ENCODE measurements at regions of chr21 and their contacts with region 1.

Region 1: DNA sequence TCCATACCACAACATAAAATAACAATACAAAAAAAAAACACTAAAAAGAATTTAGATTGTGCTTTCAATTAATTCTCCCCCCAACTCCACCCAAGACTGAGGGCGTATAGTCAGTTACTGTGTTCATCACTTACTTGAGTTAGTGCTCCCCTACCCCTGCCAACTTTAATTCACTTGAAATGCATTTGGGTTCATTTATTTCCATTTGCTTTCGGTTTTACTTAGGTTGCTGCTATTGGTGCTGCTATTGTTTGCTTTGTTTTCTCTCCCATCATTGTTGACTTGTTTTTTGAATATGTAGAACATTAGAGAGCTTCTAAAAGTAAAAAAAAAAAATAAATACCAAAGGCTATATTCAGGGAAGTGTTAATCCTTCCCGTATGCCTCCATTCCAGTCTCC is 10.7 kb upstream of the CYYR1 start:
- DNase-seq: no peak
- H3K4me3 ChIP-seq: no peak overlapping the region
- H3K27ac ChIP-seq: no peak overlapping the region
- H3K4me1 ChIP-seq: no peaks in the 10 kb centered on the region
- H3K27me3 ChIP-seq: no peaks in the 10 kb centered on the region
- CTCF ChIP-seq: no peak
- EP300 ChIP-seq: no peak
- POLR2A ChIP-seq: no peak

Region 2: DNA sequence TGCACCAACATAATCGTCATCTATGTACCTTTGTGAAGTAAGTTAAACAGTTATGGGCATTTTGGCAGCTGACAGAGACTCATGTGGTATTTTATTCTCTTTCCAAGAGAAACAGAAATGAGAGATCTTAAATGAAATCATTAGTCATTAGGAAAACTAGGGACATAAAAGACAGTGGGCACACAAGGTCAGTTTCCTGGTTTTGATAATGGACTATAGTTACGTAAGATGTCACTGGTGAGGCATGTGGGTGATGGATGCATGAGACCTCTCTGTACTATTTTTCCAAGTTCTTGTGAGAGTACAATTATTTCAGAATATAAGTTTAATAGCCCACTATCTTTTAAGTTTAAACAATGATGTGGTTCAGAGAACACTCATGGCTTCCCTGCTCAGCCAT is 630.1 kb before region 1 on chr21:
- in situ Hi-C with region 1: no loop called
- intact Hi-C with region 1: no loop called
- DNase-seq: no peak
- H3K4me3 ChIP-seq: no peak overlapping the region
- H3K27ac ChIP-seq: no peak overlapping the region
- H3K4me1 ChIP-seq: peaks cover 0 to 15% (median 10%) of the 10 kb centered on the region in 4 donors
- H3K27me3 ChIP-seq: no peaks in the 10 kb centered on the region
- CTCF ChIP-seq: no peak
- EP300 ChIP-seq: no peak
- POLR2A ChIP-seq: no peak

Region 3: DNA sequence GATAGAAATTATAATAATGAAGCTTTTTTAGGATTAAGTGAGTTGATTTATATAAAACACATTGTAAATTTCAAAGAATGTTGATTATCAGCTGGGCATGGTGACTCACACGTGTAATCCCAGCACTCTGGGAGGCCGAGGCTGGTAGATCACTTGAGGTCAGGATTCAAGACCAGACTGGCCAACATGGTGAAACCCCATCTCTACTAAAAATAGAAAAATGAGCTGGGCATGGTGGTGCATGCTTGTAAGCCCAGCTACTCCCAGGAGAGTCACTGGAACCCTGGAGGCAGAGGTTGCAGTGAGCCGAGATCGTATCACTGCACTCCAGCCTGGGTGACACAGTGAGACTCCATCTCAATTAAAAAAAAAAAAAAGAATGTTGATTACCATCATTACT is 243.0 kb after region 1 on chr21:
- in situ Hi-C with region 1: no loop called
- intact Hi-C with region 1: loop called (anchors 5 kb)
- DNase-seq: no peak
- H3K4me3 ChIP-seq: no peak overlapping the region
- H3K27ac ChIP-seq: no peak overlapping the region
- H3K4me1 ChIP-seq: no peaks in the 10 kb centered on the region
- H3K27me3 ChIP-seq: no peaks in the 10 kb centered on the region
- CTCF ChIP-seq: no peak
- EP300 ChIP-seq: no peak
- POLR2A ChIP-seq: no peak

Measured in transverse colon (tissue), 4 donors.